Calu3 (cell line): ENCODE measurements at regions of chrX and their contacts with region 1.

Region 1: DNA sequence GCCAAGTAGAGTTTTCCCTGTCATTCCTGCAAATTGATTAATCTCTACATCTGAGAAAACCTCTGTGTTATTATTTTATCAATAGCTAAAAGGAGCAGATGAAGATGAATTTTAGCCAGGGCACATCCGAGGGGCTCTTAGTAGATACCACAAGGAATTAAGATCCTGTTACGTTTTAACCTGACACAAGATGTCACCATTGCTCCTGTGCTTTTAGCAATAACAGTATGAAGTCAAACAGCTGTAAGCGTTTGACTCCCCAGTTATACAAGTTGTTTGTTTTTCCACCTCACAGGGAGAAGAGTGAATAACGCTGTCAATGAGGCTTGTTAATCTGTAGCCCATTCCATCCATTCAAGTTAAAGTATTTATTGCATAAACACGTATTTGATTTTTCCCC is 76.0 kb upstream of the AP1S2 start:
- DNase-seq: no peak
- H3K4me3 Mint-ChIP-seq: no peak overlapping the region
- H3K27ac Mint-ChIP-seq: no peak overlapping the region
- H3K4me1 Mint-ChIP-seq: peaks cover 14% of the 10 kb centered on the region
- H3K27me3 Mint-ChIP-seq: peaks cover 15% of the 10 kb centered on the region
- CTCF ChIP-seq: peak; percentile 10

Region 2: DNA sequence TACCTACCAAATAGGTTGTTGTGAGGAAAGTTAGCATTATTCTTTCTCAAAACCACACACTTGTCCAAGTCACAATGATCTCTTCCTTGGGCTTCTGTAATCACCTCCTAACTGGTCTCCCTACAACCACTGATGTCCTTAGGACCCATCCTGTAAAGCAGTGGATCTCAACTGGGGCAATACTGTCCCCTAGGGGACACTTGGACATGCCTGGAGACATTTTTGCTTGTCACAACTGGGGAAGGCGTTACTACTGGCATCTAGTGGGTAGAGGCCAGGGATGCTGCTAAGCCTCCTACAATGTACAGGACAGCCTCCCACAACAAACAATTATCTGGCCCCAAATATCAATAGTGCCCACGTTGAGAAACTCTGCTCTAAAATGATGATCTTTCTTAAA is 42.7 kb after region 1 on chrX:
- CTCF ChIA-PET with region 1: interaction called, 3 read pairs
- intact Hi-C with region 1: loop called (anchors 2 kb)
- DNase-seq: peak; percentile 59
- H3K4me3 Mint-ChIP-seq: no peak overlapping the region
- H3K27ac Mint-ChIP-seq: no peak overlapping the region
- H3K4me1 Mint-ChIP-seq: no peaks in the 10 kb centered on the region
- H3K27me3 Mint-ChIP-seq: no peaks in the 10 kb centered on the region
- CTCF ChIP-seq: peak; percentile 34

Region 3: GRCh38 chrX:16123222-16123786 is 192.7 kb after region 1 on chrX and contains the start of gene GRPR:
- CTCF ChIA-PET with region 1: interaction called, 8 read pairs
- intact Hi-C with region 1: loop called (anchors 10 kb)
- DNase-seq: peak; percentile 79
- H3K4me3 Mint-ChIP-seq: no peak within 1 kb of the TSS
- H3K27ac Mint-ChIP-seq: peak within 1 kb of the TSS; percentile 56
- H3K4me1 Mint-ChIP-seq: peaks cover 28% of the 10 kb centered on the region
- H3K27me3 Mint-ChIP-seq: no peaks in the 10 kb centered on the region
- CTCF ChIP-seq: peak; percentile 43
- total RNA-seq, gene GRPR: 0.32 and 0.85 TPM in 2 replicates

Region 4: GRCh38 chrX:16212436-16212835 is 281.9 kb after region 1 on chrX:
- CTCF ChIA-PET with region 1: interaction called, 3 read pairs
- intact Hi-C with region 1: loop called (anchors 1 kb)
- DNase-seq: peak; percentile 35
- H3K4me3 Mint-ChIP-seq: no peak overlapping the region
- H3K27ac Mint-ChIP-seq: no peak overlapping the region
- H3K4me1 Mint-ChIP-seq: peaks cover 15% of the 10 kb centered on the region
- H3K27me3 Mint-ChIP-seq: no peaks in the 10 kb centered on the region
- CTCF ChIP-seq: no peak

Region 5: DNA sequence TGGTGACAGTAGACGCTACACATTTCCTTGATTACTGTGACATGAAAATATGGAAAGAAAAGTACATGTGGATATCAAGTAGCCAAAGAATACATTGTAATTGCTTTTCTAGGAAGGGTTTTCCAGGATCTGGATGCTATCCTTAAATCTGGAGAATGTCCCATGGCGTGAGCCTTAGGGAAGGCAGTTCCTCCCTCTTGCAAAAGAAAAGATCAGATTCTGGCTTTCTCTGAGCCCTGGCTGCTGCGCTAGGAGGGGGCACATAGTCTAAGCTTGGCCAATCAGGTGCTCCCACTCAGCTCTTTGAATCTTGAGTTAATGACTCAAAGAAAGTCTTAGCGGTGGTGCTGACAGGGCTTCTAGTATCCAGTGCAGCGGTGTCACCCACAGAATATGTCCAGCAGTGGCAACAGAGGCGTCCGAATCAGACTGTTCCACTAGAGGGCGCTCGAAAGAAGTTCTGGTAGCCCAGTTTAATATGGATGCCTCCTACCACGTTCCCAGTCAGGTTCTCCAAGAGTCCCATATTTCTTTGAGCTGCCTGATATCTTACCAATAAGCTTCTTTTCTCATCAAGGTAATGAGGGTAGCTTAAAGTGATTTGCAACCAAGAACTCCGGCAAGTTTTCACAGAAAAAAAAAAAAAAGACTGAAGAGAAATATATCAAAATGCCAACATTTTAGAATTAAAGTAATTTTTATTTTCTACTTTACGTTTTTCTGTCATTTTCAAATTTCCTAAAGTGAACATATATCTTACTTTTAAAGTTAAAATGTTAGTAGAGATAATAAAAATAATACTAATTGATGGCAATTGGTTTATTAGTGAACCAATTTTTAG is 506.0 kb after region 1 on chrX:
- CTCF ChIA-PET with region 1: interaction called, 4 read pairs
- intact Hi-C with region 1: loop called (anchors 1 kb)
- DNase-seq: peak; percentile 80
- H3K4me3 Mint-ChIP-seq: no peak overlapping the region
- H3K27ac Mint-ChIP-seq: no peak overlapping the region
- H3K4me1 Mint-ChIP-seq: no peaks in the 10 kb centered on the region
- H3K27me3 Mint-ChIP-seq: no peaks in the 10 kb centered on the region
- CTCF ChIP-seq: peak; percentile 49

Region 6: DNA sequence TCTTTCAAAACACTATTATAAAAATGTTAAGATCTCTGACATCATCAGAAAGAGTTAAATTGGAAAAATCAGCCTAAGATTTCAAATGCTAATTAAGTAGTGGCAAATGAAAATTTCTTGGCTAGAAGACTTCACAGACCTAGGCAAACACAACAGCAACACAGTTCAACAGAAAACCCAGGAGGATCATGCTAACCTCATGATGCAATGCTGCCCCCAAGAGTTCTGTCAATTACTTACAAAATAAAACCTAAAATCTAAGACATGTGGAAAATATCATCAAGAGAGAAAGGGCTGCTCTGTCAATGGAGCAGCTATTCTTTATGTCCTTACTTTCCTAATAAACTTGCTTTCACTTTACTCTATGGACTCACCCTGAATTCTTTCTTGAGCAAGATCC is 740.4 kb after region 1 on chrX:
- CTCF ChIA-PET with region 1: no interaction called
- intact Hi-C with region 1: loop called (anchors 5 kb)
- DNase-seq: peak; percentile 5
- H3K4me3 Mint-ChIP-seq: no peak overlapping the region
- H3K27ac Mint-ChIP-seq: no peak overlapping the region
- H3K4me1 Mint-ChIP-seq: no peaks in the 10 kb centered on the region
- H3K27me3 Mint-ChIP-seq: no peaks in the 10 kb centered on the region
- CTCF ChIP-seq: no peak